ENCODE measurements at regions of chr6 and their contacts with region 1.

Region 1: DNA sequence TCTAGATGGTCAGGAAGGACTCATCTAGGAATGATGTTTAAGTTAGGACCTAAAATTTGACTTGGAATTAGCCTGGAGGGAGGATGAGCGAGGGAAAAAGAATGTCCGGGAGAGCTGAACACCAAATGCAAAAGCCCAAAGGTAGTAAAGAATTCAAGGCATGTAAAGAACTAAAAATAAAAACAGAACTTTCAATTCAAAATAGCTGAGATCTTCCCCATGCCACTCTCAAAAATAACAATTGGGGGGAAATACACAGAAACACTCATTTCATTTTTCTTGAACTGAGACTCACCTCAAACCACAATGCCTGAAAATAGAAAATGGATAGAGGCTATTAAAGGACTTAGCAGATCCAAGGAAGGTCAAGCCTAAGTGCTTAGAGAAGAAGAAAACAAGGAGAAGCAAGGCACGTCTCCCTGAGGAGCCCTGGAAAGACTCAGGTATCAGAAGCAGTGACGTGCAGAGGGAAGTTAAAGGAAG is 10.5 kb downstream of the PXT1 start:
- DNase-seq: no peak

Region 2: GRCh38 chr6:36350681-36351571 is 81.3 kb before region 1 on chr6:
- intact Hi-C with region 1: loop called (anchors 10 kb)
- DNase-seq: peak in 1 of 10 donors; percentile 67

Region 3: DNA sequence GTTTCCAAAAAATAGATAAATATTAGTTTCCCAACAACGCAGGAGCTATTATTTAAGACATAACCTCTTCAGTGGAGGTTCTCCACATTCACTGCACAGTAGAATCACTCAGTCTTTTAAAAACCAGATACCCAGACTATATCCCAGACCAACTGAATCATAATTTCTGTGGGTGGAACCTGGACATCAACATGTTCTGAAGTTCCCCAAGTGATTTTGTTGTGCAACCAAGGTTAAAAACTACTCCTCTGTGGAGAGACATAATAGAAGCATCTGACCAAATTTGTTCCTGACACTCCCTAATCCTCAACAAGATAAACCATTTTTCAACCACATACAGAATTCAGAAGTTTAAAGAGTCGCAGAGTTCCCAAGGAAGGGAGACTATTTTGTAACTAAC is 72.8 kb after region 1 on chr6:
- intact Hi-C with region 1: no loop called
- DNase-seq: no peak